ENCODE measurements at regions of chr7 and their contacts with region 1.

Region 1: GRCh38 chr7:54758702-54759592 is at the start of gene SEC61G:
- DNase-seq: peak; percentile 96
- ATAC-seq: peak; percentile 97
- H3K4me3 ChIP-seq: peak within 1 kb of the TSS; percentile 63 to 94 (median 89)
- H3K4me3 Mint-ChIP-seq: peak within 1 kb of the TSS; percentile 100
- H3K27ac ChIP-seq: peak within 1 kb of the TSS; percentile 78 to 80
- H3K27ac Mint-ChIP-seq: peak within 1 kb of the TSS; percentile 96
- H3K4me1 ChIP-seq: peaks cover 10 to 21% of the 10 kb centered on the region in 2 donors
- H3K4me1 Mint-ChIP-seq: peaks cover 27% of the 10 kb centered on the region
- H3K27me3 ChIP-seq: no peaks in the 10 kb centered on the region
- H3K27me3 Mint-ChIP-seq: peaks cover 2% of the 10 kb centered on the region
- CTCF ChIP-seq: no peak
- total RNA-seq, gene SEC61G: 23.6 and 26.8 TPM in 2 replicates

Region 2: DNA sequence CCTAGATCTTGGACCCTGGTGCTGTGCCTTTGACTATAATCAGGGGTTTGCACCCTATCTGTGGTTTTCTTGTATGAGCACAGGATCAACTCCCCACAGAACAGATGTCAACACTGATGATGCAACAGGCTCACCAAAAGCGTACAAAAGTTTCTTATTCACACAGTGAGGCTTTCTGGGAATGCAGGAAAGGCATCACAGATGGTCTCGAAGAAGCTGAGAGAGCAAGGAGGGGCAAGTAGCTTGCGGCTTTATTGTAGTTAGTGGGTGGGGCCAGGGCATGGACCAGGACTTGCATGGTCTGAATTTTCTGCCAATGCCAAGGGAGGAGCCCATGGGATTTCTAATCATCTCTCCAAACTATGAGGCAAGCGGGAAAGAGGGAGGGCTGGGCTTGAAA is 46.1 kb before region 1 on chr7:
- CTCF ChIA-PET with region 1: no interaction called
- POLR2A ChIA-PET with region 1: no interaction called
- intact Hi-C with region 1: no loop called
- DNase-seq: no peak
- ATAC-seq: no peak
- H3K4me3 ChIP-seq: no peak overlapping the region
- H3K4me3 Mint-ChIP-seq: no peak overlapping the region
- H3K27ac ChIP-seq: no peak overlapping the region
- H3K27ac Mint-ChIP-seq: no peak overlapping the region
- H3K4me1 ChIP-seq: no peaks in the 10 kb centered on the region
- H3K4me1 Mint-ChIP-seq: no peaks in the 10 kb centered on the region
- H3K27me3 ChIP-seq: no peaks in the 10 kb centered on the region
- H3K27me3 Mint-ChIP-seq: no peaks in the 10 kb centered on the region
- CTCF ChIP-seq: no peak

Region 3: DNA sequence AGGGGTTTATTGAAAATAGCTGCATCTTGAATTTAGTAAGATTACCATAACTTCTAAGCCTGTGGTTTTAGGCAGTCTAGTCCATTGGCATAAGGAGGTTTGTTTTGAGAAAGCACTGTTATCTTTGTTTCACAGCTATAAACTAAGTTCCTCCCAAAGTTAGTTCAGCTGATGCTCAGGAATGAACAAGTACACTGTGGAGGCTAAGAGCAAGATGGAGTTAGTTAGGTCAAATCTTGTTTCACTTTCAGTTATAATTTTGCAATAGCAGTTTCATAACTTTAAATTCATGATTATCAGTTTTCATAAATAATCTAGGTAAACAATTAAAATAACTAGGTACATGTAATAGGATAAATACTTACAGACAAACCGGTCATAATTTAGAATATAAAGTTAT is 15.4 kb before region 1 on chr7:
- CTCF ChIA-PET with region 1: no interaction called
- POLR2A ChIA-PET with region 1: no interaction called
- intact Hi-C with region 1: no loop called
- DNase-seq: no peak
- ATAC-seq: no peak
- H3K4me3 ChIP-seq: no peak overlapping the region
- H3K4me3 Mint-ChIP-seq: no peak overlapping the region
- H3K27ac ChIP-seq: no peak overlapping the region
- H3K27ac Mint-ChIP-seq: no peak overlapping the region
- H3K4me1 ChIP-seq: no peaks in the 10 kb centered on the region
- H3K4me1 Mint-ChIP-seq: no peaks in the 10 kb centered on the region
- H3K27me3 ChIP-seq: no peaks in the 10 kb centered on the region
- H3K27me3 Mint-ChIP-seq: no peaks in the 10 kb centered on the region
- CTCF ChIP-seq: no peak

Region 4: DNA sequence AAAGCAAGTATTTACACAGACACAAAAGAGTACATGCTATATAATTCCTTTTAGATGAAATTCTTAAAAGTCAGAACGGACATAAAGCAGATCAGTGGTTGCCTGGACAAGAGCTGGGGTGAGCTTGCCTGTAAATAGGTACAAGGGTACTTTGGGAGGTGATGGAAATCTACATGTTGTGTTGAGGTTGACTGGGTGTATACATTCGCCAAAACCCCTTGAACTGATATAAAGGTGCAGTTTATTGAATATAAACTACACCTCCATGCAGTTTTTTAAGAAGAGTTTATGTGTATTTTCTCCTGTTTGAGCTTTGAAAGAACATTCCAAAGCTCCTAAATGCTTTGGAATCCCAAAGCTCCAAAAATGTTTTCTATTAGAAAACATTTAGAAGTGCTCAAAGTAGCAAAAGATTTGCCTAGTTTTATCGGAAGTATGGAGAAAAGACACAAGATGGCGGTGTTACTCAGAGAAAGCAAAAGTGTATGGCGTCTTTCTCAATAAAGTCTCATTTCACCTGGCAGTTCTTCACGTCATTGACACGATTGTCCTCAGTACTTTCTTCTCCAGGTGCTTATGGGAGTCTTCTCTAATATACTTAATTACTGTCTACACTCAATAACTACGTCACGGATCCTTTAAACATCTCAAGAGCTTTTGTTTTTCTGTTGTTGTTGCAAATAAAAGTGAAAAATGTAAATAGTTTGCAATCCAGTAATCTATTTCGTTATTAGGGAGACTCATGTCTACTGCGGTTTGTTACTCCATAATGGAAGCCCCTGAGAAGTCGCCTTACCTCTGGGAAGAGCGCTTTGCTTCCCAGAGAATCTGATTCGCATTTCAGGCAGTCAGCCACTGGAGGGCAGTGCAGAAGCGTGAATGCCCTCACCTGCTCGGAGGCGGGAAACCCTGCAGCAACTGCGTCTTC is 14.8 kb after region 1 on chr7:
- CTCF ChIA-PET with region 1: interaction called, 31 read pairs
- POLR2A ChIA-PET with region 1: no interaction called
- intact Hi-C with region 1: loop called (anchors 1 kb)
- DNase-seq: peak; percentile 61
- ATAC-seq: peak; percentile 78
- H3K4me3 ChIP-seq: peak overlapping the region in 4 of 5 experiments; percentile 29 to 46 (median 40)
- H3K4me3 Mint-ChIP-seq: peak overlapping the region; percentile 83
- H3K27ac ChIP-seq: no peak overlapping the region
- H3K27ac Mint-ChIP-seq: peak overlapping the region; percentile 35
- H3K4me1 ChIP-seq: no peaks in the 10 kb centered on the region
- H3K4me1 Mint-ChIP-seq: peaks cover 9% of the 10 kb centered on the region
- H3K27me3 ChIP-seq: peaks cover 0 to 19% (median 9%) of the 10 kb centered on the region in 4 experiments
- H3K27me3 Mint-ChIP-seq: peaks cover 28% of the 10 kb centered on the region
- CTCF ChIP-seq: peak; percentile 85

Region 5: GRCh38 chr7:56106108-56107073 is 1347.4 kb after region 1 on chr7 and contains the start of gene CHCHD2:
- CTCF ChIA-PET with region 1: no interaction called
- POLR2A ChIA-PET with region 1: interaction called, 4 read pairs
- intact Hi-C with region 1: loop called (anchors 1 kb)
- DNase-seq: peak; percentile 97
- ATAC-seq: peak; percentile 99
- H3K4me3 ChIP-seq: peak within 1 kb of the TSS; percentile 75 to 99 (median 87)
- H3K4me3 Mint-ChIP-seq: peak within 1 kb of the TSS; percentile 99
- H3K27ac ChIP-seq: peak within 1 kb of the TSS; percentile 77 to 89
- H3K27ac Mint-ChIP-seq: peak within 1 kb of the TSS; percentile 98
- H3K4me1 ChIP-seq: peaks cover 17 to 22% of the 10 kb centered on the region in 2 donors
- H3K4me1 Mint-ChIP-seq: peaks cover 36% of the 10 kb centered on the region
- H3K27me3 ChIP-seq: peaks cover 0 to 3% (median 0%) of the 10 kb centered on the region in 4 experiments
- H3K27me3 Mint-ChIP-seq: peaks cover 3% of the 10 kb centered on the region
- CTCF ChIP-seq: no peak
- total RNA-seq, gene CHCHD2: 166 and 168 TPM in 2 replicates

Measured in B cell (primary cell).